ENCODE measurements at regions of chr3 and their contacts with region 1.

Region 1: GRCh38 chr3:47791193-47791855 is 9.6 kb upstream of the SMARCC1 start:
- DNase-seq: no peak
- ATAC-seq: no peak
- H3K4me3 Mint-ChIP-seq: no peak overlapping the region
- H3K27ac Mint-ChIP-seq: no peak overlapping the region
- H3K4me1 Mint-ChIP-seq: peaks cover 4% of the 10 kb centered on the region
- H3K27me3 Mint-ChIP-seq: no peaks in the 10 kb centered on the region
- CTCF ChIP-seq: no peak

Region 2: GRCh38 chr3:47380601-47381316 is 410.6 kb before region 1 on chr3 and contains the start of gene PTPN23:
- CTCF ChIA-PET with region 1: no interaction called
- POLR2A ChIA-PET with region 1: no interaction called
- intact Hi-C with region 1: loop called (anchors 2 kb)
- DNase-seq: peak; percentile 98
- ATAC-seq: peak; percentile 80
- H3K4me3 Mint-ChIP-seq: peak within 1 kb of the TSS; percentile 95
- H3K27ac Mint-ChIP-seq: peak within 1 kb of the TSS; percentile 96
- H3K4me1 Mint-ChIP-seq: peaks cover 49% of the 10 kb centered on the region
- H3K27me3 Mint-ChIP-seq: no peaks in the 10 kb centered on the region
- CTCF ChIP-seq: no peak
- total RNA-seq, gene PTPN23: 44.0 and 50.3 TPM in 2 replicates

Region 3: GRCh38 chr3:47420511-47421484 is 370.5 kb before region 1 on chr3:
- CTCF ChIA-PET with region 1: no interaction called
- POLR2A ChIA-PET with region 1: no interaction called
- intact Hi-C with region 1: loop called (anchors 1 kb)
- DNase-seq: peak; percentile 75
- ATAC-seq: peak; percentile 98
- H3K4me3 Mint-ChIP-seq: peak overlapping the region; percentile 75
- H3K27ac Mint-ChIP-seq: peak overlapping the region; percentile 98
- H3K4me1 Mint-ChIP-seq: peaks cover 16% of the 10 kb centered on the region
- H3K27me3 Mint-ChIP-seq: no peaks in the 10 kb centered on the region
- CTCF ChIP-seq: no peak

Region 4: DNA sequence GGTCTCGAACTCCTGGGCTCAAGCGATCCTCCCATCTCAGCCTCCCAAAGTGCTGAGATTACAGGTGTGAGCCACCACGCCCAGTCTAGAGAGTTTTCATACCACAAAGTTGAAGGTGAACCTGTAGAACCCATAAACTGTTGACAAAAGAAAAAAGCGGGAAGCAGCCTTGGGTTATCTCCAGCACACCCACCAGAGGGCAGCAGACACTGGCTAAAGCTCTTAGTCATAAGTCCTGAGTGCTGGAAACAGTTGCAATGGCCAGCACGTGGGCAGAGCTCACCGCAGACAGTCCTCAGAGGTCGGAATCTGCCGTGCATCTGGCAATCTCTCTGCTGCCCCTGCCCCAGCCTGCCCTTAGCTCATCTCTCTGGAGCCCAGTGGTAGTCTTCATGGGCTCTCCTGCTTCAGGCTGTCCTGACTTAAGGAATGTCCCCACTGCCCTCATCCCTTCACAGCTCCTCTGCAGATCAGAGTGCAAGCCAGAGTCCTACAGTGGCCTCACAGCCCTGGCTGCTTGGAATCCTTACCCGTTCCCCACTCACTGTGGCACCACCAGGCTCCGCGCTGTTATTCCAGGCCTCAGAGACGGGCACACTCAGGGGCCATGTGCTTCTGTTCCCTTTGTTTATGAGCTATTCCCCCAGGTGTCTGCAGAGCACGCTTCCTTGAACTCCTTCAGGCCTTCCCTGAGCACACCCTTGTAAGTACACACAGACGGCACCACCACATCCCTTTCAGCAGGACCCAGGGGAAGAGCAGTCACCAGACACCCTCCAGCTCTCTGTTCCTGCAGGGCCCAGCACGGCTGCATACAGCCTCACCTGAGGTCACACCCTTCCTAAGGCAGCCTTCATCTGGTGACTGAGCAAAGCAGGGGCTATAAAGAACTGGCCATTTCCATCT is 269.0 kb before region 1 on chr3:
- CTCF ChIA-PET with region 1: interaction called, 32 read pairs
- POLR2A ChIA-PET with region 1: interaction called, 15 read pairs
- intact Hi-C with region 1: loop called (anchors 1 kb)
- DNase-seq: peak; percentile 55
- ATAC-seq: peak; percentile 95
- H3K4me3 Mint-ChIP-seq: no peak overlapping the region
- H3K27ac Mint-ChIP-seq: no peak overlapping the region
- H3K4me1 Mint-ChIP-seq: peaks cover 8% of the 10 kb centered on the region
- H3K27me3 Mint-ChIP-seq: no peaks in the 10 kb centered on the region
- CTCF ChIP-seq: peak; percentile 20

Region 5: DNA sequence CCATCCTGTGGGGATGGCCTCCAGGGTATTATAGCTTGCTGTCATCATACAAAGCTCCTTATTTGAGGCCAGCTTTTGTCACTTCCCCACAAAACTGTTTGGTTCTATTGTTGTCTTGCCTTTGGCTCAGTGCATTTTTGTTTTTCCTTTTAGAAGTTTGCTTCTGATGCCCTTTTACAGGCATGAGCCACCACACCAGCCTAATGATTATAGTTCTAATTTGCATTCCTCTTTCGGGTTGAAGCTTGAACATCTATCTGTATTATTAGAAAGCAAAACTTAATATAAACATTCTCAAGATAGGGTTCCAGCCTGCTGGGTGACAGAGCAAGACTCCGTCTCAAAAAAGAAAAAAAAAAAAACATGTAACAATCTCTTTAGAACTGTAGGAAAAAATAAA is 49.4 kb before region 1 on chr3:
- CTCF ChIA-PET with region 1: interaction called, 3 read pairs
- POLR2A ChIA-PET with region 1: interaction called, 14 read pairs
- intact Hi-C with region 1: no loop called
- DNase-seq: no peak
- ATAC-seq: no peak
- H3K4me3 Mint-ChIP-seq: no peak overlapping the region
- H3K27ac Mint-ChIP-seq: no peak overlapping the region
- H3K4me1 Mint-ChIP-seq: peaks cover 33% of the 10 kb centered on the region
- H3K27me3 Mint-ChIP-seq: no peaks in the 10 kb centered on the region
- CTCF ChIP-seq: no peak

Region 6: GRCh38 chr3:47802734-47803477 is 11.6 kb after region 1 on chr3 and contains the start of gene DHX30:
- CTCF ChIA-PET with region 1: interaction called, 6 read pairs
- POLR2A ChIA-PET with region 1: interaction called, 3 read pairs
- intact Hi-C with region 1: loop called (anchors 1 kb)
- DNase-seq: peak; percentile 87
- ATAC-seq: peak; percentile 93
- H3K4me3 Mint-ChIP-seq: peak within 1 kb of the TSS; percentile 93
- H3K27ac Mint-ChIP-seq: peak within 1 kb of the TSS; percentile 92
- H3K4me1 Mint-ChIP-seq: peaks cover 20% of the 10 kb centered on the region
- H3K27me3 Mint-ChIP-seq: no peaks in the 10 kb centered on the region
- CTCF ChIP-seq: no peak
- total RNA-seq, gene DHX30: 71.3 and 77.4 TPM in 2 replicates

Measured in activated B cell treated with CpG ODN at 0.5 μM for 24 hours (primary cell).